ENCODE measurements at regions of chr18 and their contacts with region 1.

Region 1: GRCh38 chr18:50819728-50820378 is at the start of gene MRO:
- DNase-seq: peak; percentile 70
- ATAC-seq: peak; percentile 86
- H3K4me3 Mint-ChIP-seq: no peak within 1 kb of the TSS
- H3K27ac Mint-ChIP-seq: no peak within 1 kb of the TSS
- H3K4me1 Mint-ChIP-seq: peaks cover 28% of the 10 kb centered on the region
- H3K27me3 Mint-ChIP-seq: no peaks in the 10 kb centered on the region
- CTCF ChIP-seq: peak; percentile 90
- total RNA-seq, gene MRO: not detected in 2 replicates

Region 2: DNA sequence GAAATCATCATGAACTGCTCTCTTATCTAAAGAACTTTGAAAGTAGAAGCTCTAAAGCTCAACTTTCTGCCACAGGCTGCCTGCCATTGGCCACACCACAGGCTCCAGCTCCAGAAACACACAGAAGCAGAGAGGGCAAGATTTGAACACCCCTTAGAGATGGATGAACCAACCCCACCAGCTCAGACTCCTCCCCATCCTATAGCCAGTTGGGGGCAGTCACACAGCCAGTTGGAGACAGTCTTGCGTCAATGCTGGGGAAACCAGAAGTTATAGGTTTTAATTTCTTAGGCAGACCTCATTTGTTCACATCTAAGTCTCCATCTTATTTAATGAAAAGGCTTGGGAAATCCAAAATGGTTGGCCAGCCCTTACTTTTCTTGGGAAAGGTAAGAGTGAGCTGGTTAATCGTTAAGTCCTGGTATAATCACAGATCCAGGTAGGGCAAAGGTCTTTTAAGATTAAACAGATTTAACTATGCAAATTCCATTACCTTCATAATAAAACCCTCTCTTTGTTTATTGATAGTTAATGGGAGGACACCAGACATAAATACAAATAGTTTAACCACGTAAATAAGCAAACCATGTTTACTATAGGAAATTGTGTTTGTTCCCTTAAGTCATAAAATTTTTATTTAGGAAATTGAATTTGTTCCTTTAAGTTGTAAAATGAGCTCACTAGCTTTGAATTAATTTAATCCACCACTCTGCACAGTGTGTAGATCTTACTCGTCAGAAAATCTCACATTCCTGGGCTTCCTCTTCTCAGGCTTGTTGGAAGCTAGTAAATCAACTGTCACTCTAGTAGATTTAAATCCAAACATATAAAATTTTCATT is 28.0 kb before region 1 on chr18:
- CTCF ChIA-PET with region 1: no interaction called
- POLR2A ChIA-PET with region 1: no interaction called
- intact Hi-C with region 1: no loop called
- DNase-seq: no peak
- ATAC-seq: no peak
- H3K4me3 Mint-ChIP-seq: no peak overlapping the region
- H3K27ac Mint-ChIP-seq: no peak overlapping the region
- H3K4me1 Mint-ChIP-seq: no peaks in the 10 kb centered on the region
- H3K27me3 Mint-ChIP-seq: peaks cover 16% of the 10 kb centered on the region
- CTCF ChIP-seq: no peak

Region 3: GRCh38 chr18:50830544-50830943 is 10.7 kb after region 1 on chr18:
- CTCF ChIA-PET with region 1: interaction called, 15 read pairs
- POLR2A ChIA-PET with region 1: interaction called, 10 read pairs
- intact Hi-C with region 1: no loop called
- DNase-seq: no peak
- ATAC-seq: peak; percentile 84
- H3K4me3 Mint-ChIP-seq: peak overlapping the region; percentile 11
- H3K27ac Mint-ChIP-seq: peak overlapping the region; percentile 71
- H3K4me1 Mint-ChIP-seq: peaks cover 27% of the 10 kb centered on the region
- H3K27me3 Mint-ChIP-seq: no peaks in the 10 kb centered on the region
- CTCF ChIP-seq: no peak

Region 4: DNA sequence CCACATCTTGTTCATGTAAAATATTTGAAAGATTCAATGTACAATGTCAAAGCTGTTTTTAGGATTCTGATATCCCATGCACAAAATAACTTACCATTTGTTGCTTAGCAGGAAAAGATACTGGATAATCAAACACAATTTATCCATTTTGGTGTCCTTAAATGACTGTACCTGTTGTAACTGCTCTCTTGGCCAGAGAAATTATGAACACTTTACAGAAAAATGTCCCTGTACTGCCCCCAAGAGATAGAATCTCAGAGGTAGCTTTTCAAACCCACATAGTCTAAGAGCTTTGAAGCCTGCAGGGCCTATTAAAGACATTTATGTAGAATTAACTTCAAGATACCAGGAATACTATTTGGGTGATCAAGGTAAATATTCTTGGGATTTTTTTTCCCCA is 46.9 kb after region 1 on chr18:
- CTCF ChIA-PET with region 1: interaction called, 25 read pairs
- POLR2A ChIA-PET with region 1: no interaction called
- intact Hi-C with region 1: loop called (anchors 1 kb)
- DNase-seq: no peak
- ATAC-seq: no peak
- H3K4me3 Mint-ChIP-seq: no peak overlapping the region
- H3K27ac Mint-ChIP-seq: no peak overlapping the region
- H3K4me1 Mint-ChIP-seq: peaks cover 13% of the 10 kb centered on the region
- H3K27me3 Mint-ChIP-seq: no peaks in the 10 kb centered on the region
- CTCF ChIP-seq: no peak

Region 5: GRCh38 chr18:50917021-50917420 is 97.2 kb after region 1 on chr18:
- CTCF ChIA-PET with region 1: no interaction called
- POLR2A ChIA-PET with region 1: no interaction called
- intact Hi-C with region 1: loop called (anchors 5 kb)
- DNase-seq: no peak
- ATAC-seq: no peak
- H3K4me3 Mint-ChIP-seq: no peak overlapping the region
- H3K27ac Mint-ChIP-seq: no peak overlapping the region
- H3K4me1 Mint-ChIP-seq: no peaks in the 10 kb centered on the region
- H3K27me3 Mint-ChIP-seq: no peaks in the 10 kb centered on the region
- CTCF ChIP-seq: no peak

Region 6: GRCh38 chr18:51029694-51030536 is 210.1 kb after region 1 on chr18 and contains the start of gene SMAD4:
- CTCF ChIA-PET with region 1: interaction called, 7 read pairs
- POLR2A ChIA-PET with region 1: interaction called, 5 read pairs
- intact Hi-C with region 1: loop called (anchors 1 kb)
- DNase-seq: peak; percentile 98
- ATAC-seq: peak; percentile 85
- H3K4me3 Mint-ChIP-seq: peak within 1 kb of the TSS; percentile 96
- H3K27ac Mint-ChIP-seq: peak within 1 kb of the TSS; percentile 96
- H3K4me1 Mint-ChIP-seq: peaks cover 57% of the 10 kb centered on the region
- H3K27me3 Mint-ChIP-seq: no peaks in the 10 kb centered on the region
- CTCF ChIP-seq: no peak
- total RNA-seq, gene SMAD4: 83.8 and 94.9 TPM in 2 replicates

Region 7: DNA sequence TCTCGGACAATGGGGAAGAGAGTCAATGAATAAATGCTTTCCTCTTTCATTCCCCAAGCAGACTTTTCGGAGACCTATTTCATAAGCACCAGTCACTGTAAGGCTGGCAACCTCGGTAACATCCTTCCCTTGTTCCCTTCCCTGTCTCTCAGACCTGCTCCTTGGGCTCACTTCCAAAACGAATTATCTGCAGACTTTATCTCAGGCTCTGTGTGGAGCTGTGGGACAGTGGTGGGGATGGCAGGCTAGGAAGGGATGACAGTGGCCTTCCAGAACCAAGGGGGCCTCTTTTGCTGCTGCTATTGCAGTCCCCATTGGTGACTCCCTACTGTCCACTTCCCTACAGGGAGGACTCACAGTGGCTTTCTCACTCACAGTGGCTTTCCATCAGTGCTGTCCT is 563.3 kb after region 1 on chr18:
- CTCF ChIA-PET with region 1: no interaction called
- POLR2A ChIA-PET with region 1: no interaction called
- intact Hi-C with region 1: loop called (anchors 10 kb)
- DNase-seq: no peak
- ATAC-seq: no peak
- H3K4me3 Mint-ChIP-seq: no peak overlapping the region
- H3K27ac Mint-ChIP-seq: no peak overlapping the region
- H3K4me1 Mint-ChIP-seq: no peaks in the 10 kb centered on the region
- H3K27me3 Mint-ChIP-seq: peaks cover 2% of the 10 kb centered on the region
- CTCF ChIP-seq: no peak